HEK293T (cell line): ENCODE measurements at regions of chr10 and their contacts with region 1.

Region 1: GRCh38 chr10:5813287-5814109 is at the start of gene GDI2:
- DNase-seq: peak; percentile 98

Region 2: DNA sequence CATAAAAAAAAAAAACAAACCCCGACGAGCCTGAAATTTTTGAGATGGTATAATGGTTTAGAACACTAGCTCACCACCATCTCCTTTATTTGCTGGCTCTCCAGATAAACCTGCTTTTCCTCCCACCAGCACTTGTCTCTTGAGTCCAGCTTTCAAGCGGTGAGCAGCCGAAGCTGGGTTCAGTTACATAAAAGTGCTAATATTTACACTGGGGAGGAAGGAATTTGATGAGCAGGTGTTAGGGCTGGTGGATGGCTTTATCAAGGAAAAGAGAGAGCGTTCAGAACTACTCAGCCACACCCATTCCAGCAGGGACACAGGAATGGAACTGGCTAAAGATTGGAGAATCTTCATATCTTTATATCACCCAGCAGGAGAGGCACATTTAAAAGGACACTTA is 295.4 kb before region 1 on chr10:
- CTCF ChIA-PET with region 1: no interaction called
- POLR2A ChIA-PET with region 1: no interaction called
- DNase-seq: no peak

Region 3: GRCh38 chr10:5844345-5845048 is 31.0 kb after region 1 on chr10:
- CTCF ChIA-PET with region 1: interaction called, 7 read pairs
- POLR2A ChIA-PET with region 1: interaction called, 17 read pairs
- DNase-seq: no peak

Region 4: DNA sequence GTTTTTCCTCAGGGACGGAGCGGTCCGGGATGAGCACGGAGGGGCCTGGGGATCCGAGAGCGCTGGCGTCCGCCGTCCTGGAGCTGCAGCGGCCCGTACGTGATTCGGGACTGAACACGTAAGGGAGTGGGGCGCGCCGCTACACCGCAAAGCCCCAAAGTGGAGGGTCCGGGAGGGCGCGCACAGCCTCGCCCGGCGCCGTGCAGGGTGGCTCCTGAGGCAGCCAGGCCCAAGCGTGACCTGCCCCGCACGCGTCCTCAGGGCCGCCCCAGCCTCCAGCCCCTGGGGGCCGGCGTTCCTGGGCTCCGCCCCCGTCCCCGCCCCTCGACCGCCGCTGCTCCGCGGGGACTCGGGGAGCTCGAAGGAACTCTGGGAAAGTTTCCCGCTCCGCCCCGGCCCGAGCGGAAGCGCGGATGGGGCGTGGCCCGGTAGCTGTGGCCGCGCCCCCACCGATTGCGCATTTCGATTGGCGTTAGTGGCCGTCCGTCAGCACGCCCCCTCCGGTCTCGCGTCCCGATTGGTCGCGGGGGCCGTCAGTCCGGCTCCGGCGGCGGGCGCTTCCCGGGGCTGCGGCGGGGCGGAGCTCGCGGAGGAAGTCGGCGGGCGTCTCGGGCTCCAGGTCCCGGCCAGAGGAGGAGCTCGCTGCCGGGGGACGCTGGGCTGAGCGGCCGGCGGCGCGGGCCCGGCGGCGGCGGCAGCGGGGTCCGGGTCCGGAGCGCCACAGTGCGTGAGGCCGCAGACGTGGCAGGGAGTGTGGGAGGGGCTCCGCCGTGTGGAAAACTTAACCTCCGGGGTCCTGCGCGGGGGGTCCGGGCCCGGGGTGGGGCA is 76.3 kb after region 1 on chr10 and contains the starts of genes ANKRD16 and FBH1:
- CTCF ChIA-PET with region 1: interaction called, 4 read pairs
- POLR2A ChIA-PET with region 1: interaction called, 19 read pairs
- DNase-seq: peak; percentile 97